Posterior vena cava (tissue), 2 donors: ENCODE measurements at regions of chr12 and their contacts with region 1.

Region 1: GRCh38 chr12:46693034-46693433 is 132.8 kb downstream of the SLC38A4 start:
- DNase-seq: no peak

Region 2: DNA sequence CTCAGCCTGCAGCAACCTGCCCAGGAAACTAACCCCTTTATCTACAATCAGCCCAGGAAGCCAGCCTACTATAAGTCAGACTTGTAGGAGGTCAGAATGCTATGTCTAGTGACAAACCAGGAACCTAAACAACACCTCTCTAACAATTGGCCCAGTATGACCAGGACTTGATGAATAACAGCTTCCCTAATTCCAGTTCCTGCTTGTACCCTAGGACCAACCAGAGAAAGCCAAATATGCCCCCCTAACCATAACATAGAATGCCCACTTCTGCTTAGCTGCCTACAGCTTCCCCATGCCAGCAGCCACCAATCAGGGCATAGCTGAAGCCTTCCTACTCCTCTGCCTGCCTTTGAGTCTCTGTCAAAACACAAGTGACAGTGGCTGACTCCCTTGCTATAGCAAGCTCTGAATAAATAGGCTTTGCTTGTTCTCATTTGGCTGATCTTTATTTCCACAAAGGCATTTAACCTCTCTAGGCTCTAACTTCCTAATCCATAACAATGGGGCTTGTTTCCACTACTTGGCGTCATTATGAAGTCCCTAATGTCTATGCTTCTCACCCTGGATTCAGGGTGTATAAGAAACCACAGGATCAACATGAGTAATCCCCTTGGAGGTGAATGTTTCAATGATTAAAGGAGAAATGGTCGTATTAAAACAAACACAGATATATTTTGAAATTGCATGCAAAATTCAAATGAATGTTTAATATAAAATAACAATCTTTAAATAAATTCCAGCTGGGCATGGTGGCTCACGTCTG is 1256.9 kb before region 1 on chr12:
- intact Hi-C with region 1: loop called in 1 of 2 experiments (anchors 5 kb)
- DNase-seq: no peak

Region 3: DNA sequence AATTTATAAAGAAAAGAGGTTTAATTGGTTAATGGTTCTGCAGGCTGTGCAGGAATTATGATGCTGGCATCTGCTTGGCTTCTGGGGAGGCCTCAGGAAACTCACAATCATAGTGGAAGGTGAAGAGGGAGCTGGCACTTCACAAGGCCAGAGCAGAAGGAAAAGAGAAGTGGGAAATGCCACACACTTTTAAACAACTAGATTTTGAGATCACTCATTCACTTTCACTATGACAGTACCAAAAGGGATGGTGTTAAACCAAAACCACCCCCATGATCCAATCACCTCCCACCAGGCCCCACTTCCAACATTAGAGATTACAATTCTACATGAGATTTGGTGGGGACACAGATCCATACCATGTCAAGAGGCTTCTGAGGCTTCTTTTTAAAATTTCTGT is 70.2 kb after region 1 on chr12:
- intact Hi-C with region 1: no loop called
- DNase-seq: no peak

Region 4: GRCh38 chr12:47634127-47634526 is 941.1 kb after region 1 on chr12:
- intact Hi-C with region 1: loop called in 1 of 2 experiments (anchors 5 kb)
- DNase-seq: no peak